ENCODE measurements at regions of chr3 and their contacts with region 1.

Region 1: DNA sequence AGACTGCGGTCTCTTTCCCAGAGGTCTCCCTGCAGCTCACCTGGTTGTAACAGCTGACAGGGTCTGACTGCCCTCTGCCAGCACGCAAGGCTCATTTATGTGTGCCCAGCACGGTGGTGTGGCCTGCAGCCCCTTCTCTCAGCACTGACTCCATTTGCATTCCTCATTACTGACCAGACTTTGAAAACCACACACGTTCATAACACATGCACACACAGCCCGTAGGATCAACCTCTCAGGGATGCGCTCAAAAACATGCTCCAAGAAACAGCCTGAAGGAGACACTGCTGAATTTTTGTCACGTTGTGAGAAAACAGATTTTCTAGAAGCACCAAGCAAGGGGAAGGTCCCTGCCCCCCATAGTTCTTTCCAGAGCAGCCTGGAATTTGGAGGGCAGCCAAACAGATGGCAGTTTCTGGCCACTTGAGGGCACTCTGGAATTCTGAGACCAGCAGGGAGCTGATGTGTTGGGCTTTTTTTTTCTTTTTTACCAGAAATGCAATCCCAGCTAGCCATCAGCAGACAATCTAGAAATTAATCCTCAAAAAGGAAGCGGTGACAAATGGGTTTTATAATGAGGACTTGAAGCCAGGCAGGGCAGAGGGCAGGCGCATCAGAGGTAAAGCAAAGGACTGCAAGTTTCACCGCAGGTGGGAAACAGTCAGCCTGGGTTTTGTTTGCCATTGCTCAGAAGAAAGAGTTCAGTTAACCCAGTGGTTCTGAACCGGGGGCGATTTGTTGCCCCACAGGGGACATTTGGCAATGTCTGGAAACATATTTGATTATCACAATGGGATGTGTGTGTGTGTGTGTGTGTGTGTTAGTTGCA is 170.5 kb upstream of the PROK2 start:
- DNase-seq: peak; percentile 78
- H3K4me3 Mint-ChIP-seq: no peak overlapping the region
- H3K27ac Mint-ChIP-seq: no peak overlapping the region
- H3K4me1 Mint-ChIP-seq: no peaks in the 10 kb centered on the region
- H3K27me3 Mint-ChIP-seq: peaks cover 22% of the 10 kb centered on the region
- CTCF ChIP-seq: peak; percentile 56

Region 2: GRCh38 chr3:71942432-71943187 is 12.8 kb before region 1 on chr3:
- CTCF ChIA-PET with region 1: interaction called, 15 read pairs
- POLR2A ChIA-PET with region 1: no interaction called
- intact Hi-C with region 1: no loop called
- DNase-seq: no peak
- H3K4me3 Mint-ChIP-seq: no peak overlapping the region
- H3K27ac Mint-ChIP-seq: no peak overlapping the region
- H3K4me1 Mint-ChIP-seq: no peaks in the 10 kb centered on the region
- H3K27me3 Mint-ChIP-seq: peaks cover 67% of the 10 kb centered on the region
- CTCF ChIP-seq: no peak

Region 3: DNA sequence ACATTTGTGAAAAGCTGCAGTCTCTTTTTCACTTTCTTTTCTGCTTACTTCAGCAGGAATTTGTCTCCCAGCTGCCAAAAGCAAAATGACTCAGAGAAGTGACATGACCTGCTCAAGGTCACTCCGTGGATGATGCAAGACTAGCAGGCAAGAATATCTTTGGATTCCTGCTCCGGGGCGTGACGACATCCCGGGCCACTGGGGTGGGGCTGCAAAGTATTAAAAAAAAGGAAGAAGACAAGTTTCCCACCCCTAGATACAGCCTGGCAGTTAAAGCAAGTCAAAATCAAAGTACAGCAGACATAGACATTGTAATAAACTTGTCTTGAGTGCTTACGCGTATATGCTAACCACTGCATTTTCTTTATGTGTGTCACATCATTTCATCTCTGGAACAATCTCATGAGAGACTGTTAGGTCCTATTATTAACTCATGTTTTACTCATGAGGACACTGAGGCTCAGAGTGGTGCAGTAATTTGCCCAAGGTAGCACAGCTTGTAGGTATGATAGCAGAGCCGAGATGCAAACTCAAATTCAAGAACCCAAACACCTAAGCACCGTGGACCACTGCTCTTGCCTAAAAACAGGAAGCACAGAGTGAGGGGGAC is 314.7 kb after region 1 on chr3:
- CTCF ChIA-PET with region 1: interaction called, 5 read pairs
- POLR2A ChIA-PET with region 1: no interaction called
- intact Hi-C with region 1: loop called (anchors 1 kb)
- DNase-seq: peak; percentile 93
- H3K4me3 Mint-ChIP-seq: peak overlapping the region; percentile 15
- H3K27ac Mint-ChIP-seq: peak overlapping the region; percentile 88
- H3K4me1 Mint-ChIP-seq: peaks cover 32% of the 10 kb centered on the region
- H3K27me3 Mint-ChIP-seq: peaks cover 7% of the 10 kb centered on the region
- CTCF ChIP-seq: no peak

Measured in MCF 10A (cell line).